ENCODE measurements at regions of chr18 and their contacts with region 1.

Region 1: DNA sequence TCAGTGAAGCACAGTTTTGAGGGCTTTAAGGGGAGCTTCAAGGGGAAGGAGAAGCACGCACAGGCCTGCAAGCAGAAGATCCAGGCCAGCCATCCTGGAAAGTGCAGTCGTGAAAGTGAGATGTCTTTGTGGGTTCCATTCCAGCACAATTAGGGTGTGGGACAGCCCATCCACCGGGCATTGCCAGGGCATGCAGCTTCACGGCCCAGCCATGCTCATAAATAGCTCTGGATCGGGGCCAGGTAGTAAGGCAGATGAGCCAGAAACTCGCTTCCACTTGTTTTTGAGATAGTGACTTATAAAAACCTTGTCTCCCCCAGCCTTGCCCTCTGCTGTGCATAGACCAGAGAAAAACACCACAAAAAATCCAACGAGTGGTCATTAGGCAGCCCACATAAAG is 21.0 kb downstream of the KDSR start:
- DNase-seq: no peak
- ATAC-seq: no peak
- H3K4me3 ChIP-seq: no peak overlapping the region
- H3K4me3 Mint-ChIP-seq: no peak overlapping the region
- H3K27ac ChIP-seq: no peak overlapping the region
- H3K27ac Mint-ChIP-seq: no peak overlapping the region
- H3K4me1 ChIP-seq: no peaks in the 10 kb centered on the region
- H3K4me1 Mint-ChIP-seq: peaks cover 0 to 6% (median 0%) of the 10 kb centered on the region in 7 donors
- H3K27me3 ChIP-seq: no peaks in the 10 kb centered on the region
- H3K27me3 Mint-ChIP-seq: no peaks in the 10 kb centered on the region

Region 2: GRCh38 chr18:63273222-63273927 is 72.7 kb before region 1 on chr18:
- CTCF ChIA-PET with region 1: no interaction called
- POLR2A ChIA-PET with region 1: no interaction called
- intact Hi-C with region 1: loop called in 1 of 2 experiments (anchors 2 kb)
- DNase-seq: no peak
- ATAC-seq: no peak
- H3K4me3 ChIP-seq: no peak overlapping the region
- H3K4me3 Mint-ChIP-seq: peak overlapping the region in 6 of 10 donors; percentile 3 to 58 (median 30)
- H3K27ac ChIP-seq: no peak overlapping the region
- H3K27ac Mint-ChIP-seq: peak overlapping the region in 7 of 9 donors; percentile 6 to 79 (median 43)
- H3K4me1 ChIP-seq: peaks cover 9 to 41% of the 10 kb centered on the region in 2 donors
- H3K4me1 Mint-ChIP-seq: peaks cover 49 to 97% (median 91%) of the 10 kb centered on the region in 7 donors
- H3K27me3 ChIP-seq: no peaks in the 10 kb centered on the region
- H3K27me3 Mint-ChIP-seq: no peaks in the 10 kb centered on the region

Measured in naive thymus-derived CD4-positive, alpha-beta T cell (primary cell).